AG04449 (cell line): ENCODE measurements at regions of chr11 and their contacts with region 1.

Region 1: GRCh38 chr11:78000193-78000592 is 5.7 kb upstream of the INTS4 start:
- DNase-seq: peak; percentile 28
- H3K4me3 ChIP-seq: no peak overlapping the region
- CTCF ChIP-seq: peak; percentile 68

Region 2: DNA sequence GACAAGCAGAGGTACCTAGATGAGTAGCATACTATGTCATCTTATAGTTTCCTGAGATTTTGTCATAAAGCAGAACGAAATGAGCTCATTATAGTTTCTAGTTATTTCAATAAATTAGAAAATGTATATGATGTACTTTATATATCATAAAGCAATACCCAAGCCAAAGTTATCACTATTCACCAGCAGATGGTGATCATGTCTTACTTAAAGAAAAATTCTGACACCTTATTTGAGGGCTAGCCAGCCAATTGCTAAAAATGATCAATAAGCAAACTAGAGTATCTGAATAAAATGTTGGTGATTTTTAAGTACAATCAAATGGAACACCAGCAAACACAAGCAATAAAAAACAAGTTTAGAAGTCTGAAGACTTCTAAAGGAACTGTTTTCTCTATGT is 223.7 kb before region 1 on chr11:
- CTCF ChIA-PET with region 1: interaction called, 24 read pairs
- POLR2A ChIA-PET with region 1: no interaction called
- DNase-seq: no peak
- H3K4me3 ChIP-seq: no peak overlapping the region
- CTCF ChIP-seq: no peak

Region 3: DNA sequence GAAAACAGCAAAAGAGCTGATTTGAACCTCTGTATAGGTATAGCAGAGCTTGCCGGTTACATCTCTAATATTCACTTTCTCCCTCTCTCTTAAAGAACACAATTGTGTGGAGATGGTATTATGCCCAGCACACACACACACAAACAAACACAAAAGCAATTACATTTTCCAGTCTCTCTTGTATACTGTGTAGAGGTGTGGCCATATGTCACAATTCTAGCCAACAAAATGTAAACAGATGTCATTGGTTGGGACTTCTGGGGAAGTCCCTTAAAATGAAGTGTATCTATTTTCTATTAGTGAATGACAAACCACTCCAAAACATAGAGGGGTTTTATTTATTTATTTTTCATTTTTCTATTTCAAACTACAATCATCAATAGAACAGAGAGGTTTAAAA is 10.1 kb after region 1 on chr11:
- CTCF ChIA-PET with region 1: interaction called, 11 read pairs
- POLR2A ChIA-PET with region 1: no interaction called
- DNase-seq: no peak
- H3K4me3 ChIP-seq: no peak overlapping the region
- CTCF ChIP-seq: no peak